Activated CD4-positive, alpha-beta T cell treated with anti-CD3 and anti-CD28 coated beads, Interleukin-2, amount 10 ng/mL, durations not matched to agents 24 days and 14 days (primary cell): ENCODE measurements at regions of chr13 and their contacts with region 1.

Region 1: GRCh38 chr13:57624565-57625435 is 6.7 kb upstream of the PCDH17 start:
- DNase-seq: peak; percentile 69
- H3K4me3 Mint-ChIP-seq: no peak overlapping the region
- H3K27ac Mint-ChIP-seq: no peak overlapping the region
- H3K4me1 Mint-ChIP-seq: peaks cover under 1% of the 10 kb centered on the region
- H3K27me3 Mint-ChIP-seq: peaks cover 14% of the 10 kb centered on the region

Region 2: GRCh38 chr13:57874530-57874929 is 249.7 kb after region 1 on chr13:
- intact Hi-C with region 1: no loop called
- DNase-seq: no peak
- H3K4me3 Mint-ChIP-seq: no peak overlapping the region
- H3K27ac Mint-ChIP-seq: no peak overlapping the region
- H3K4me1 Mint-ChIP-seq: no peaks in the 10 kb centered on the region
- H3K27me3 Mint-ChIP-seq: no peaks in the 10 kb centered on the region

Region 3: GRCh38 chr13:59318320-59318930 is 1693.6 kb after region 1 on chr13:
- intact Hi-C with region 1: loop called (anchors 5 kb)
- DNase-seq: peak; percentile 86
- H3K4me3 Mint-ChIP-seq: no peak overlapping the region
- H3K27ac Mint-ChIP-seq: no peak overlapping the region
- H3K4me1 Mint-ChIP-seq: no peaks in the 10 kb centered on the region
- H3K27me3 Mint-ChIP-seq: peaks cover 2% of the 10 kb centered on the region